ENCODE measurements at regions of chr15 and their contacts with region 1.

Region 1: DNA sequence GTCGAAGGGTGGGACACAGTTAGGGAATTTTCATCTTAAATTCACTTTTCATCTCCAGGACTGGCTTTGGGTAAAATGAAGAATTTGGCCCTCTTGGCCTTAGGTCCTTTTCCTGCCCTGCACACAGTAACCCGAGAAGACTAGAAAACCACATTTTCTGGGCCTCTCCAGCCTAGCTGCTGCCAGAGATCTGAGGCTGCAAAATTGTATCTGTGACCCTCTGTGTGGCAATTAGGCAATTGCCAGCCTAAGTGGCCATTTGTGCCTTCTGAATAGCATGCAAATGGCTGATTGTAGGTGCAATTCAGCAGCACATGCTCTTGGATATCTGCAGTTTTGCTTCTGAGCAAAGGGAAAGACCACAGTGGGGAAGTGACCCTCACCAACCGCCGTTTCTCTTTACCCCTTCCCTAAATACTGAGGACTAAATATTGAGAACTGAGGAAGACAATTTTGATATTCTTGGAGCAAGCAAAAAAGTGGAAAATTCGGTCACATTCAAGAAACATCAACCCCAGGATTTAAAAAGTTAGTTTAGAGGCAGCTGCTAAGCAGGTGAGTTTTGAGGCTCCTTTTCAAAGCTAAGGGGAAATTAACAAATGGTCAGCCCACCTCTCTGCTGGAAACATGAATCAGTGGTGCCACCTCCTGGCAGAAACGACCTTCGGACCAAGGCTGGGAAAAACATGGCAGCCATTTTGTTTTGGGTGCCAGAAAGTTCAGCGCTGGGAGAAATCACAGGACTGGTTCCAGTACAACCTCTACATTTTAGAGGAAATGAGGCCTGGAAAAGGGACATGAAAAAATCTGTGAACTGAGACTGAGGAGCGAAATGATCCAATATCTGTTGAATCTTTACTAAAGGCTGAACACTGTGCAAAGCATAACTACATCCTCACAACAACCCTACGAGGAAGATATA is 56.6 kb upstream of the PRTG start:
- DNase-seq: no peak
- ATAC-seq: peak; percentile 82
- H3K4me3 ChIP-seq: no peak overlapping the region
- H3K27ac ChIP-seq: peak overlapping the region; percentile 63; the same call in 1 of the 2 replicates
- H3K4me1 ChIP-seq: no peaks in the 10 kb centered on the region; the same call in 1 of the 2 replicates
- H3K27me3 ChIP-seq: no peaks in the 10 kb centered on the region
- CTCF ChIP-seq: peak; percentile 77

Region 2: GRCh38 chr15:54264056-54264455 is 1535.5 kb before region 1 on chr15:
- CTCF ChIA-PET with region 1: no interaction called
- POLR2A ChIA-PET with region 1: no interaction called
- in situ Hi-C with region 1: no loop called
- intact Hi-C with region 1: no loop called
- DNase-seq: no peak
- ATAC-seq: no peak
- H3K4me3 ChIP-seq: no peak overlapping the region
- H3K27ac ChIP-seq: no peak overlapping the region
- H3K4me1 ChIP-seq: no peaks in the 10 kb centered on the region
- H3K27me3 ChIP-seq: no peaks in the 10 kb centered on the region
- CTCF ChIP-seq: no peak

Region 3: DNA sequence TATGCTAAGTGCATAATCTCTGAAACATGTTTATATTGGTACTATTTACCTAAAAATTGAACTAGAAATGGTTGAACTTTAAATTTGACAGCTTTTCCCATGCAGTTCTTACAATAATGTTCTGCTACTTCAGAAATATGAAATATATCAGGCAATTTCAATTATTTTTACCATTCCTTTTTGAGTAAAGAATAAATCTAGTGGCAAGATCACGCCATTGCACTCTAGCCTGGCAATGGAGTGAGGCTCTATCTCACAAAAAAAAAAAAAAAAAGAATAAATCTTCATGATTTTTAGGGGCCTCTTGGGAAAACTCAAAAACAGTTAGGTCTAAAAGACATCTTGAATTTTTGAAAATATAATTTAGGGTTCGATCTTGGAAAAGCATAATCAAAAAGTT is 280.9 kb before region 1 on chr15:
- CTCF ChIA-PET with region 1: no interaction called
- POLR2A ChIA-PET with region 1: no interaction called
- in situ Hi-C with region 1: no loop called
- intact Hi-C with region 1: loop called (anchors 10 kb)
- DNase-seq: no peak
- ATAC-seq: no peak
- H3K4me3 ChIP-seq: no peak overlapping the region
- H3K27ac ChIP-seq: no peak overlapping the region
- H3K4me1 ChIP-seq: no peaks in the 10 kb centered on the region
- H3K27me3 ChIP-seq: no peaks in the 10 kb centered on the region
- CTCF ChIP-seq: peak; percentile 40; the same call in 1 of the 2 replicates

Region 4: DNA sequence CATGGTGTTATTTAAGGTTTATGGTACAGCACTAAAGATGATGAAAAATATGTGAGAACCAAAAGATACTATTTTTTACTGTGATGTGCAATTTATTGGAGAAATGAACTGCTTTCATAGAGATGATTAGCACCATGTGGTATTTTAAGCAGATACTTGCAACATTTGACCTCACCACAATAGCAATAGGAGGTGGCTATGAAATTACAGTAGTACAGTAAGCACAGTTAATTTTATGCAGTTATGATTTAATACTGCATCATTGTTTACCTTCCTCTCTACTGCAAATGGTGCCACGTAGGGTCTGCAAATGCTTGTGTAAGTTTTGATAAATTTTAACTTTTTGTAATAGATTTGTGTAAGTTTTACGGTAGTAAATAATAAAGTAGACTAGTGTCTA is 225.5 kb before region 1 on chr15:
- CTCF ChIA-PET with region 1: no interaction called
- POLR2A ChIA-PET with region 1: no interaction called
- in situ Hi-C with region 1: no loop called
- intact Hi-C with region 1: no loop called
- DNase-seq: no peak
- ATAC-seq: no peak
- H3K4me3 ChIP-seq: no peak overlapping the region
- H3K27ac ChIP-seq: no peak overlapping the region
- H3K4me1 ChIP-seq: no peaks in the 10 kb centered on the region
- H3K27me3 ChIP-seq: no peaks in the 10 kb centered on the region
- CTCF ChIP-seq: no peak

Region 5: DNA sequence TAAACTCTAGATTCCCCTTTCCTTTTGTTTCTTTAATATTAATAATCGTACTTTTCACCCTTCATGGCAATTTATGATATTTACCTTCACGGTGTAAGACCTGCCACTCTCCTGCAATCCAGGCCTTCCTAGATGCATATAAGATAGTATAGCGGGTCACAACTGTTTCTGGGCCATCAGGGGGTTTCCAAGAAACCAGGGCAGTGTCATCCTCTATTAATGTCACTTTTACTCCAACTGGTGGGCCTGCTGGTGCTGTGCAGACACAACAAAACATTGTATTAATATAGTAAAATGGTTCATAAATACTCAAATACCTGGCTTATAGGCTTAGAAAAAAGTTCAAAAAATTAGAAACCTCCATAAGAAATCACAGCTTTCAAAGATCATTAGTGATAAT is 162.5 kb before region 1 on chr15:
- CTCF ChIA-PET with region 1: no interaction called
- POLR2A ChIA-PET with region 1: no interaction called
- in situ Hi-C with region 1: no loop called
- intact Hi-C with region 1: no loop called
- DNase-seq: no peak
- ATAC-seq: no peak
- H3K4me3 ChIP-seq: no peak overlapping the region
- H3K27ac ChIP-seq: no peak overlapping the region
- H3K4me1 ChIP-seq: no peaks in the 10 kb centered on the region
- H3K27me3 ChIP-seq: no peaks in the 10 kb centered on the region
- CTCF ChIP-seq: no peak

Region 6: DNA sequence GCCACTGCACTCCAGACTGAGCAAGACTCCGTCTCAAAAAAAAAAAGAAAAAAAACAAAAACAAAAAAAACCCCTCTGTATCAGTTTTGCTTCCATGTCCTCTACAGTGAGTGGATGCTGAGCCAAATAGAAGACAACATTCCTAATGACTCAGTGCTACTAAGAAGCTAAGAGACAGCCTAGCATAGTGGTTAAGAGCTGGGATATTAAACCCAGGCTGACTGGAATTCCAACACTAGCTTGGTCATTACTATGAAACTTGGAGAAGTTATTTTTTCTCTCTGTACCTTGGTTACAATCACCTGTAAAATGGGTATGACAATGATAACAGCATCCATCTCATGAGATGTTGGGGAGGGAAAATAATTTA is 150.5 kb before region 1 on chr15:
- CTCF ChIA-PET with region 1: no interaction called
- POLR2A ChIA-PET with region 1: no interaction called
- in situ Hi-C with region 1: no loop called
- intact Hi-C with region 1: loop called (anchors 1 kb)
- DNase-seq: no peak
- ATAC-seq: no peak; the same call in 1 of the 2 replicates
- H3K4me3 ChIP-seq: no peak overlapping the region
- H3K27ac ChIP-seq: no peak overlapping the region
- H3K4me1 ChIP-seq: no peaks in the 10 kb centered on the region
- H3K27me3 ChIP-seq: no peaks in the 10 kb centered on the region
- CTCF ChIP-seq: no peak

Region 7: GRCh38 chr15:55742927-55743728 is 56.4 kb before region 1 on chr15 and contains the start of gene PRTG:
- CTCF ChIA-PET with region 1: no interaction called
- POLR2A ChIA-PET with region 1: interaction called, 10 read pairs
- in situ Hi-C with region 1: no loop called
- intact Hi-C with region 1: no loop called
- DNase-seq: no peak
- ATAC-seq: peak; percentile 98
- H3K4me3 ChIP-seq: peak within 1 kb of the TSS; percentile 64 to 89
- H3K27ac ChIP-seq: peak within 1 kb of the TSS; percentile 82
- H3K4me1 ChIP-seq: peaks cover 13% of the 10 kb centered on the region
- H3K27me3 ChIP-seq: no peaks in the 10 kb centered on the region
- CTCF ChIP-seq: no peak
- total RNA-seq, gene PRTG: 11.4 TPM